WTC11 (cell line): ENCODE measurements at regions of chr3 and their contacts with region 1.

Region 1: GRCh38 chr3:52880474-52880873 is 16.9 kb downstream of the STIMATE start:
- DNase-seq: no peak
- ATAC-seq: no peak
- H3K4me3 Mint-ChIP-seq: no peak overlapping the region
- H3K27ac Mint-ChIP-seq: no peak overlapping the region
- H3K4me1 Mint-ChIP-seq: peaks cover 6% of the 10 kb centered on the region
- H3K27me3 Mint-ChIP-seq: no peaks in the 10 kb centered on the region
- CTCF ChIP-seq: no peak

Region 2: DNA sequence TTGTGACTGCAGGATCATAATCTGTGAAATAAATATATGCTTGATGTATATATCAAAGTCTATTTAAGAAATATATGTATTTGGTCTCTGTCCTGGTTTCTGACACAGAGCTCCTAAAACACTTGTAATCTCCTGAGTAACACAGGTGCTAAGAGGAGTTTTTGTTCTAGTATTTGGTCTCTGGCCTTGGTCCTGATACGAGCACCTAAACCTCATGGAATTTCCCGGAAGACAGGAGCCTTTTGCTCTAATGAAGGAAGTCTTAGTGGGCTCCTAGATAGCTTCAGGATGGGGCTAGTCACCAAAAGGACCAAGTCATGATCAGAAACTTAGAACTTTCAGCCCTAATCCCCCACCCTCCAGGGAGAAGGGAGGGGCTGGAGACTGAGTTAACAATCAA is 26.5 kb before region 1 on chr3:
- CTCF ChIA-PET with region 1: interaction called, 10 read pairs
- POLR2A ChIA-PET with region 1: no interaction called
- DNase-seq: no peak
- ATAC-seq: 0 out of 2 replicates have a peak, but pooled peaks have one; percentile 17
- H3K4me3 Mint-ChIP-seq: no peak overlapping the region
- H3K27ac Mint-ChIP-seq: no peak overlapping the region
- H3K4me1 Mint-ChIP-seq: no peaks in the 10 kb centered on the region
- H3K27me3 Mint-ChIP-seq: no peaks in the 10 kb centered on the region
- CTCF ChIP-seq: no peak

Region 3: DNA sequence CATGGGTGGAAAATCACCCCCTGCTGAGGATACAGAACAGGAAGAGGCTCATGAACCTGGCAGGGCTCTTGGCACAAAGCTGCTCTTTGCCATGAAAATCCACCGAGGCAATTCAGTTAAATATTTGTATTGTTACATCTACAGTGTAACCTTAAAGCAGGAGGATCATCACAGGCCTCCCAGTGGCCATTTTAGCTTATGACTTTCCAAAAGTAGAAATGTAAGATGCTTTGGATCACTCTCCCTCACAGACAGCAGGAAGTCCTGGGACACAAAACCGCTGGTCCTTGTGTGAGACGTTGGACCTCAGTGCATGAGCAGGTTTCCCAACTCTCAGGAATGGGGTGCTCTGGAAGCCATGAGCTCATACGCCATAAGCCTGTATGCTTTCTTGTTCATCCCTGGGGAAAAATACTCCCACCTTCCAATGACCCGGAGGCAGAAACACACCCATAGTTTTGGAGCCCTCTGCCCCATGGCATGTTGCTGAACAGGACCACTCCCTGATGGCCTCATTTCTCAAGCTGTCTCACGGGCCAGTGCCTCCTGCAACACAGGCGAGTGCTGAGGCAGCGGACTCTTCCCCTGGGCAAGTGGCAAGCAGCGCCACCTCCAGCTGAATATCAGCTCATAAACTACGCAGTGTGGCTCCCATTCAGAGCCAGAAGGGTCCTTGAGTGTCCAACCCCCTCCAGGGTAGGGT is 13.2 kb before region 1 on chr3:
- CTCF ChIA-PET with region 1: interaction called, 11 read pairs
- POLR2A ChIA-PET with region 1: no interaction called
- DNase-seq: no peak
- ATAC-seq: no peak
- H3K4me3 Mint-ChIP-seq: no peak overlapping the region
- H3K27ac Mint-ChIP-seq: no peak overlapping the region
- H3K4me1 Mint-ChIP-seq: no peaks in the 10 kb centered on the region
- H3K27me3 Mint-ChIP-seq: no peaks in the 10 kb centered on the region; the same call in 1 of the 2 replicates
- CTCF ChIP-seq: no peak

Region 4: DNA sequence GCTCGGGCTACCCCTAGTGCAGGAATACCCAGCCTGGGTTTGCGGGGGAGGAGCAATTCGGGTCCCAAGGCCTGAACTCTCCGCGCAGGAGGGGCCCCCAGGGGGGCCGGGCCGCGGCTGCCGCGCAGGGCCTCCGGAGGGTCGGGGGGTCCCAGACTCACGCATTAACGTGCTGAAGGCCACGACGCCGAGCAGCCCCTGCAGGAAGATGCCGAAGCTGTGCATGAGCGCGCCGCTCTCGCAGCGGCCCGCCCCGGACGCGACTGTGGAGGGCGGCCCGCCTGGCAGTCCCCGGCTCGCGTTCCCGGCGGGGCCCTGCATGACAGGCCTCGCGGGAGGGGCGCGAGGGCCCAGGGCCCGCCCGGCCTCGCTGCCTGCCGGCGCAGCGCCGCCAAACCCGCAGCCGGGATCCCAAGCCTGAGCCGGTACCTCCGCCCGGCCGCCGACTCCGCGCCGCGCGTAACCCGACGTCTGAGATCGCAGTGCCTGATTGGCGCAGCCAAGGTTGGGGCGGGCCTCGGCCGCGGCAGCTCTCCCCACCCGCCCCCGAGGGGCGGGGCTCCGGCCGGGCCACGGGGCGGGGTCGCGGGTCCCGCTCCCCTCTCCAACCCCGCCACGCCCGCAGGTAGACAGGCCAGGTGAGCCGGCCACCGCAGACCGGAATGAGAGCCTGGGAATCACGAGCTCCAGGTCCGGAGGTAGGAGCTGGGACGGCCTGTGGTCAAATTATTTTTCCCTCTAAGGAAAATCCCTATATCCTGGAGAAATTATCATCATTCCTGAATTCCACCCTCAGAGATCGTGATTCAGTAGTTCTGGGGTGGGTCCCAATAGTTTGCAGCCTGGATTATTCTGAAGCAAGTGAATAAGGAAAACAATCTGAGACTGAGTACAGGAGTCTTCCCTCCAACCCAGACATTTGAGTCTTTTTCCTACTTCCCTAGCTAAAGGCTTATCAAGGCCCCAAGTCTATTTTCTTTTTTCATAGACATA is 17.0 kb after region 1 on chr3 and contains the start of gene STIMATE:
- CTCF ChIA-PET with region 1: interaction called, 19 read pairs
- POLR2A ChIA-PET with region 1: interaction called, 3 read pairs
- DNase-seq: peak; percentile 92
- ATAC-seq: peak; percentile 94
- H3K4me3 Mint-ChIP-seq: peak within 1 kb of the TSS; percentile 90
- H3K27ac Mint-ChIP-seq: peak within 1 kb of the TSS; percentile 91
- H3K4me1 Mint-ChIP-seq: peaks cover 18% of the 10 kb centered on the region
- H3K27me3 Mint-ChIP-seq: peaks cover 2% of the 10 kb centered on the region; the same call in 1 of the 2 replicates
- CTCF ChIP-seq: no peak
- total RNA-seq, gene STIMATE: 27.1 to 35.5 TPM (median 28.4 TPM) in 3 replicates

Region 5: DNA sequence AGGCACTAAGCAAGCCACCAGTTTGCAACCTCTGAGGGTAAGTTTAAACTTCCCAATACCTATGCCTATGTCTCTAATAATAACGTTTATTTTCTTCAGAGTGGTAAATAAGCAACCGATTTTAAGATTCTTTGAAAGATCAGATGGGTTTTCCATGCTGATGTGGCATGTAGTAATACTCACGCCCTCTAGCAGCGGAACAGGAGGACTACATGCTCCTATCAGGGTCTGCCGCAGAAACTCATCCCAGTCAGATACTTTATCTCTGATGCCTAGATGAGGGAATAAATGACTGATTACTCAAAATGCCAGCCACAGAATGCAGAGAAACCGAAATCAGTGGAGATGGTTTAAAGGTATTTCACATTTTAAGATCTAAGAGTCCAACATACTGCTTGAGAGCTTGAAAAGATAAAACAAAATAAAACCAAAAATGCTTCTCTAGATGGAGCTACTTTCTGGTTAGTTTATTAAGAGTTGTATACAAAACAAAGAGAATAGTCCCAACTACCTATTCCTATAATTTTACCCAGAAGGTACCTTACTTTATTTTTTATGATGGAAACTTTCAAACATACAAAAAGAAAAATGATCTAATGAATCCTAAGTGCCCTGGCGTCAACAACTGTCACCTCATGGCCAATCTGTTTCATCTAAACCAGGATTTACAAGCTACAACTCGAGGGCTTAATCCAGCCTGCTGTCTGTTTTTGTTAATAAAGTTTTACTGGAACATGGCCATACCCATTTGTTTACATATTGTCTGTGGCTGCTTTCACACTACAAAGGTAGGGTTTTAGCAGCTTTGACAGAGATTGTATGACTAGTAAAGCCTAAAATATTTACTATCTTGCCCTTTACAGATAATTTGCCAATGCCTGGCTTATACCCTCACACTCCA is 54.4 kb after region 1 on chr3:
- CTCF ChIA-PET with region 1: interaction called, 13 read pairs
- POLR2A ChIA-PET with region 1: no interaction called
- DNase-seq: peak; percentile 43
- ATAC-seq: peak; percentile 88
- H3K4me3 Mint-ChIP-seq: no peak overlapping the region
- H3K27ac Mint-ChIP-seq: peak overlapping the region; percentile 37; the same call in 1 of the 2 replicates
- H3K4me1 Mint-ChIP-seq: no peaks in the 10 kb centered on the region
- H3K27me3 Mint-ChIP-seq: no peaks in the 10 kb centered on the region
- CTCF ChIP-seq: peak; percentile 47; the same call in 1 of the 2 replicates

Region 6: GRCh38 chr3:53045518-53046170 is 165.2 kb after region 1 on chr3 and contains the start of gene SFMBT1:
- CTCF ChIA-PET with region 1: no interaction called
- POLR2A ChIA-PET with region 1: no interaction called
- DNase-seq: peak; percentile 49
- ATAC-seq: peak; percentile 18
- H3K4me3 Mint-ChIP-seq: peak within 1 kb of the TSS; percentile 90
- H3K27ac Mint-ChIP-seq: no peak within 1 kb of the TSS
- H3K4me1 Mint-ChIP-seq: peaks cover 32% of the 10 kb centered on the region
- H3K27me3 Mint-ChIP-seq: peaks cover 42% of the 10 kb centered on the region
- CTCF ChIP-seq: no peak
- total RNA-seq, gene SFMBT1: 12.3 to 20.9 TPM (median 14.7 TPM) in 3 replicates